Naive thymus-derived CD8-positive, alpha-beta T cell (primary cell): ENCODE measurements at regions of chr17 and their contacts with region 1.

Region 1: DNA sequence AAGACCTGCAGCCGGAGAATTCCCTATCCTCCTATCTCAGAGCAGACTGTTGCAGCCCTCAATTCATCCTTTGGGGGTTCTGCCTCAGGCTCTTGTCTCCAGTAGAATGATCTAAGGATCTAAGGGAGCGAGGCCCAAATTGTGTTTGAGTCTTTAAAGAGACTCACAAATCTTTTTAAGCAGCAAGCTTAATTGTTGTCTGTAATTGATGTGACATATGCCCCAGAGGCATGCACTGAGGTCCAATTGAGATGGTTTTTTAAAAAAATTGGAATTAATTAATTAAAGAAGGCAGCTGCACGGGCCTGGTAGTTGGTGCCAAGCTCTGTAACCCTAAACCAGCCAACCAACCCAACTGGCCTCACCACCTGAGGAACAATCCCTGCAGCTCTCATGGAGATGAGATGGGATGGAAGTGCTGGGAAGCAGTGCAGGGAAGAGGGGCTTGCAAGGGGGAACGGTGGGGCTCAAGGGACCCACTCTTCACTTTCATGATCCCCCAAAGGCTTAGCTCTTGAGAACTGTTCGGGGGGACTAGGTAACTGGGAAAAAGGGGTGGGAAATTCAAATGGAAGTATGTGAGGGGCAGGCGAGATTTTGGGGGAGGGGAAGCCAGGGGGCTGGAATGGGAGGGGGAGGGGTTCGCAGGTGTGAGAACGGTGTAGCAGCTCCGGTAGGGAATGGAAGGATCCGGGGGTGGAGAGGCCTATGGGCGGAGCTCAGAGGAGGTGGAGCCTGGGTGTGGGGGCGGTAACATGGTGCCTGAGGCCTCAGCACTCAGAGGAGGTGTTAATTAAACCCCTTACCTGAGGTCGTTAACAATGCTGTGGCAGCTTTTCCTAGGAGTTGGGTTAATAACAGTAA is 9.2 kb upstream of the ZNF652 start:
- DNase-seq: no peak
- ATAC-seq: no peak
- H3K4me3 Mint-ChIP-seq: no peak overlapping the region
- H3K27ac Mint-ChIP-seq: no peak overlapping the region
- H3K4me1 Mint-ChIP-seq: peaks cover 7 to 28% (median 14%) of the 10 kb centered on the region in 4 donors
- H3K27me3 Mint-ChIP-seq: no peaks in the 10 kb centered on the region

Region 2: GRCh38 chr17:49490276-49490675 is 119.1 kb after region 1 on chr17:
- POLR2A ChIA-PET with region 1: interaction called, 11 read pairs
- DNase-seq: no peak
- ATAC-seq: no peak
- H3K4me3 Mint-ChIP-seq: no peak overlapping the region
- H3K27ac Mint-ChIP-seq: no peak overlapping the region
- H3K4me1 Mint-ChIP-seq: peaks cover 5 to 20% (median 10%) of the 10 kb centered on the region in 4 donors
- H3K27me3 Mint-ChIP-seq: peaks cover 10 to 48% (median 22%) of the 10 kb centered on the region in 5 donors